Sigmoid colon (tissue), 7 donors: ENCODE measurements at regions of chr2 and their contacts with region 1.

Region 1: DNA sequence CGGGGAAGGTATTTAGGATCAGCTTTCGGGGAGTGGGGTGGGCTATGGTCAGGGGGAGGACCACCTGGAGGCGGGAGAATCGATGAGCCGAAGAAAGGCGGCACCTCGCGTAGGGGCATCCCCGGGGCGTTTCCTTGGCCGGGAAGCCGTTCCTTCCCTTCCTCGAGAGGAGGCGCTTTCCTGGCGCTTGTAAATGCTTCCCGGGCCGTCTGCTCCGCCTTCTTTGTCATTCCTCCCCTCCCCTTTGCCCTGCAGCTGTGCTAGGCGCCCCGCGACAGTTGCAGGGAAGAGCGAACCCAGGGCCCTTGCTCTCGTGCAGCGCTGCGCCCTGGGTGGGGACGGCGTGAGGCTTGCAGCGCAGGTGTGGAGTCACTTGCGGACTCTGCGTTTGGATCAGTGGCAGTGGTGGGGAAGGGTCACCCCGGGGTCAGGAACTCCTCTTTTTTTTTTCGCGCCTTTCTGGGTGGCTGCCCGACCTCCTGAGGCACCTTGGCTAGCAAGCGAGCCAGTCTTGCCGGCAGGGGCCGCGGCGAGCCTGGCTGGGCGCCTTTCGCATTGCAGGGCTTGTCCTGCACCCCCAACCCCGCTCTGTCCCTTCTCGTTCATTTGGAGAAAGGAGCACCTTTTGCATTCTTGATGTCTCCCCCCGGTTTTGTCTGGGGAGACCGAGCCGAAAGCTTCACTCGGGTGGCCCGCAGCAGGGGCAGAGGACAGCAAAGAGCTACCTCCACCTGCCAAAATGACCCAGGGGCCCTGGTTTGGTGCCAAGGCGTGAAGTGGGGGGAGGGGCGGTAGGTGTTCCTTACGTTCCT is 840 bp downstream of the KCNS3 start:
- DNase-seq: peak; percentile 80
- H3K4me3 ChIP-seq: peak overlapping the region; percentile 65 to 88 (median 69)
- H3K27ac ChIP-seq: peak overlapping the region; percentile 71 to 79 (median 78)
- H3K4me1 ChIP-seq: peaks cover 0 to 23% (median 22%) of the 10 kb centered on the region in 4 donors
- H3K27me3 ChIP-seq: peaks cover 0 to 7% (median 0%) of the 10 kb centered on the region in 3 donors
- CTCF ChIP-seq: peak in 1 of 4 experiments; percentile 38
- EP300 ChIP-seq: no peak
- POLR2A ChIP-seq: no peak

Region 2: DNA sequence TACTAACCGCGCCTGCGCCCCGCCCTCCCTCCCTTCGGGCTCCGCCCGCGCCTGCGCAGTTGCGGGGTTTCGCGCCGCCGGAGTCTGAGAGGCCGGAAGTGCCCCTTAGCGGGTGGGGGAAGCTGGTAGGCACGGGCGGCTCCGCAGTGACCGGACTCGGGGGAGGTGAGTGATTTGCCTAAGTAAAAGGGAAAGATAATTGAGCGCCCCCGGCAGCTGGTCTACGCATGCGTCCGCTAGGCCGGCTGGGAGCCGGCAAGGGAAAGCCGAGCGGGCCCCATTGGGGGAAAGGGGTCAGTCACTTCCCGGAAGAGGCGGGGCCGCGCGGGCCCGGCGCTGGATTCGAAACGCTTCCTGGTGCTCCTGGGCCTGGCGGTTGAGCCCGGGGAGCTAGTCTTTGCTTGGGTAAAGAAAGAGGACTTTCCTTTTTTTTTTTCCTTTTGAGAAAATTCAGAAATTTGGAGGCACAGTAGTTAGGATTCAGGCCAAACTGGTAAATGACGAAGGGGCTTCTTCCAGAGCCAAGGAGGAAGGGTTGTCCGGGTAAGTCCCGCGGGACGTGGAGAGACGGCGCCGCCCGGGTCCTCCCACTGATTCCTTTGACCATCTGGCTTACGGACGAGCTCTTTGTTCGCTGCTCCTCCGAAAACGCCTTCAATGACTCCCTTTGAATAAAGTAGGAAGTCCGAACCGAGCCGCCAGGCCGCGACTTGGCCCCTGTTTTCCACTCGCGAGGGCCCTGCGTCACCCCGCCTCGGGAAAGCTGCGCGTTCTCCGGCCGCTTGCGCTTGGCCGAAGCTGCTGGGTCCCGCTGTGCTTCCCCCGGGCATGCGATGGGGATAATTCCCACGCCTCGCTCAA is 125.3 kb before region 1 on chr2 and contains the starts of genes GEN1 and SMC6:
- intact Hi-C with region 1: loop called (anchors 2 kb)
- DNase-seq: peak; percentile 93
- H3K4me3 ChIP-seq: peak within 1 kb of the TSS; percentile 90 to 93 (median 92)
- H3K27ac ChIP-seq: peak within 1 kb of the TSS; percentile 93 to 98 (median 94)
- H3K4me1 ChIP-seq: peaks cover 0 to 20% (median 16%) of the 10 kb centered on the region in 4 donors
- H3K27me3 ChIP-seq: no peaks in the 10 kb centered on the region
- CTCF ChIP-seq: no peak
- EP300 ChIP-seq: no peak
- POLR2A ChIP-seq: no peak
- total RNA-seq, gene GEN1: 0.49 to 5.0 (median 2.3) TPM
- total RNA-seq, gene SMC6: 8.3 to 12.7 (median 10.8) TPM

Region 3: DNA sequence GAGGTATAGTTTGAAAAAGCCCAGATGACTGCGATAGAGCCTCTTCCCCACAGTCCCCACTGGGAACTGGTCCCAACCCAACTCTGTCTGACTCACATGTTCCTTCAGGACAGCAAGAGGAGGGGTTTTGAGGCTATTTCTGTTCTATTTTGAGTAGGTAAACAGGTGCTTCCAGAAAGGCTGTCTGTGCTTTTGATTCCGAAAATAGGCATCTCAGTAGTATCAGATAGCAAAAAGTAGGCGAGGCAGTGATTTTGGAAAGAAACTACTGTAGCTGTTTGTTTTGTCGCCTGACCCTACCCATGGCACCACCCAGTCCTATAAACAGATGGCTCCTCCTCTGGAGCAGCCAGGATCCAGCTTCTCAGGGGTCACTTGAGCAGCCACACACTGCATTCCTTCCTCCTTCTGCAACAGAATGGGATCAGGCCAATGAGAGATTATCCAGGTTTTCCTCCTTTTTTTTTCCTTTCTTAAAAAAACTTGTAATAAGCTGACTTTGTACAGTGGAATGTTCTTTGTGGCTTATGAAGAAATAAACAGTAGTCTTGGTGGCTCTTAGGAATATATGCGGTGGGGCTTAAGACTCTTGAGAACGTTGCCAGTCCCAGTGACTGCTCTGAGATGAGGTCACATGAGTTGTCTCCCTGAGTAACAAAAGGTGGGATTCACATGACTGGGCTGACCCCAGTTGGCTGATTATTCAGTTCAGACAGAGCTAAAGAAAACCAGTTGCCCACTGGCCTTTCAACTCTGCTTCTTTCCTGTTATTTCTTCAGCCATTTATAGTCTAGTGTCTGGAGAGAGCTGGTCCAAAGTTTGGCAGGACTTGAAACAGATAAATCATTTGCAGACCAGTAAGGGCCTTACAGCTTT is 97.8 kb after region 1 on chr2:
- intact Hi-C with region 1: loop called (anchors 2 kb)
- DNase-seq: peak; percentile 86
- H3K4me3 ChIP-seq: no peak overlapping the region
- H3K27ac ChIP-seq: peak overlapping the region; percentile 72 to 87 (median 74)
- H3K4me1 ChIP-seq: peaks cover 0 to 55% (median 43%) of the 10 kb centered on the region in 4 donors
- H3K27me3 ChIP-seq: no peaks in the 10 kb centered on the region
- CTCF ChIP-seq: no peak
- EP300 ChIP-seq: peak in 3 of 4 donors; percentile 41 to 68 (median 65)
- POLR2A ChIP-seq: no peak

Region 4: DNA sequence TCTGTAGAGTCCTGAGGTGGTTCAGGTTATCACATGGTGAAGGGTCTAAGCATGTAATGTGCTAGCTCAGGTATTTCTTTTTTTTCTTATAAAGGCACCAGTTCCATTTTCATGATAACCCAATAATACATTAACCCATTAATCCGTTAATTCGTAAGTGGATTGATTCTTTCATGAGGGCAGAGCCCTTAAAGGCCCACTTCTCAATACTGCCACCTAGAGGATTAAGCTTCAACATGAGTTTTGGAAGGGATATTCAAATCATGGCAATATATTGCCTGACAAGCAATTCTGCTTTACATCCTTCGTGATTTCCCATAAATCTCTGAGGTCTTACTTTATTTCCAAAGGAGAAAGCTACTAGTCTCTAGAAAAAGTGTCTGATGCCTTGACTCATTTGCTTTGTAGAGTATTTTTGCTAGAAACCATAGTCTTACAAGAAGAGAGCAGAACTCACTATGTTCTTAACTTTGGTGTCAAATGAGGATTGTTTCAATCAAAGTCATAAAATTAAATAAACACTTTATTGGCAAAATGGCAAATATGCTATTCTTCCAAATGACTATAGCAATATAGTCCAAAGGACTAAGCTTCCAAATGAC is 270.4 kb after region 1 on chr2:
- intact Hi-C with region 1: loop called (anchors 5 kb)
- DNase-seq: no peak
- H3K4me3 ChIP-seq: no peak overlapping the region
- H3K27ac ChIP-seq: no peak overlapping the region
- H3K4me1 ChIP-seq: no peaks in the 10 kb centered on the region
- H3K27me3 ChIP-seq: no peaks in the 10 kb centered on the region
- CTCF ChIP-seq: peak in 3 of 4 experiments; percentile 49 to 85 (median 49)
- EP300 ChIP-seq: no peak
- POLR2A ChIP-seq: no peak